A549 (cell line): ENCODE measurements at regions of chr1 and their contacts with region 1.

Region 1: GRCh38 chr1:154546264-154547063 is 12.0 kb downstream of the UBE2Q1 start:
- DNase-seq: peak; percentile 81 to 90
- ATAC-seq: peak; percentile 91 to 95
- H3K4me3 ChIP-seq: no peak overlapping the region
- H3K27ac ChIP-seq: no peak overlapping the region
- H3K4me1 ChIP-seq: peaks cover 21% of the 10 kb centered on the region
- CTCF ChIP-seq: peak; percentile 79
- EP300 ChIP-seq: no peak
- POLR2A ChIP-seq: no peak
- RAD21 ChIP-seq: peak; percentile 85 to 88

Region 2: GRCh38 chr1:154490317-154490716 is 56.1 kb before region 1 on chr1:
- CTCF ChIA-PET with region 1: interaction called, 15 read pairs
- POLR2A ChIA-PET with region 1: no interaction called
- DNase-seq: no peak
- ATAC-seq: no peak
- H3K4me3 ChIP-seq: no peak overlapping the region
- H3K27ac ChIP-seq: no peak overlapping the region
- H3K4me1 ChIP-seq: no peaks in the 10 kb centered on the region
- CTCF ChIP-seq: no peak
- EP300 ChIP-seq: no peak
- POLR2A ChIP-seq: no peak
- RAD21 ChIP-seq: no peak

Region 3: DNA sequence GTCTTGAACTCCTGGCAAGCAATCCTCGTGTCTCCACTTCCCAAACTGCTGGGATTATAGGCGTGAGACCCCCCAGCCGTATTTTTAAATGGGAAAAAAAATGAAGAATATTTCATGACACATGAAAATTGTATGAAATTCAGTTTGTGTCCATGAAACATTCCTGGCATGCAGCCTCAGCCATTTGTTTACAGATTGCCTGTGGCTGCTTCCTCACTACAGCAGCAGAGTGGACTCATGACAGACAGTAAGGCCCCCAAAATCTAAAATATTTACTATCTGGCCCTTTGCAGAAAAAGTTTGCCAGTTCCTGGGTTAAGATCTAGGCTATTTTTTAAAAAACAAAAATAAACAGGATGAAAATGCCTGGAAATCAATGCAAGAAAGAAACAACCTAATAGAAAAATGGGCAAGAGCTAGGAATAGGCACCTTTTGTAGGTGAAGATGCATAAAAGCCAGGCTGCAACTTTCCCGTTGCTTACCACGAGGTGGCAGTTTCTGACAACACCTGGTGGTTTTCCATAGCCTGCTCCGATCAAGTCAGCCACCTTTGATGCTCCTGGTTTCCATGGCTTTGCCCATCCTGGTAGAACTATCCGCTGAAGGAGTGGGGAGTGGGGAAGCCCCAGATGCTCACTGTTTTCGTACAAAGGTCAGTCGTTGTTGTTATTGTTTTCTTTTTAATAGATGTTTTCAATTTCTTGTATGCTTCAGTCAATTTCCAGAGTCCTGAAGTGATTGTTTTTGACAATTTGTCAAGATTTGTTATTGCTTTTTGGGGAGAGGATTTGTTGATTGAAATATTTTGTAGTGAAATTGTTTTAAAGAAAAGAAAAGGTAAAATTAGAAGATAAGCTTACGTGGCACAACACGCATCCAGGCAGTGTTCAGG is 12.3 kb before region 1 on chr1:
- CTCF ChIA-PET with region 1: interaction called, 78 read pairs
- POLR2A ChIA-PET with region 1: no interaction called
- DNase-seq: peak; percentile 77
- ATAC-seq: peak; percentile 86 to 89
- H3K4me3 ChIP-seq: no peak overlapping the region
- H3K27ac ChIP-seq: no peak overlapping the region
- H3K4me1 ChIP-seq: no peaks in the 10 kb centered on the region
- CTCF ChIP-seq: peak; percentile 76
- EP300 ChIP-seq: no peak
- POLR2A ChIP-seq: no peak
- RAD21 ChIP-seq: peak; percentile 69 to 72

Region 4: GRCh38 chr1:154627257-154628120 is 81.0 kb after region 1 on chr1:
- CTCF ChIA-PET with region 1: no interaction called
- POLR2A ChIA-PET with region 1: no interaction called
- DNase-seq: peak; percentile 78 to 93
- ATAC-seq: peak; percentile 88 to 89
- H3K4me3 ChIP-seq: peak overlapping the region; percentile 88
- H3K27ac ChIP-seq: peak overlapping the region; percentile 91 to 93
- H3K4me1 ChIP-seq: peaks cover 6% of the 10 kb centered on the region; the same call in 1 of the 3 replicates
- CTCF ChIP-seq: no peak
- EP300 ChIP-seq: no peak
- POLR2A ChIP-seq: peak; percentile 29
- RAD21 ChIP-seq: no peak